PC-3 (cell line): ENCODE measurements at regions of chr1 and their contacts with region 1.

Region 1: DNA sequence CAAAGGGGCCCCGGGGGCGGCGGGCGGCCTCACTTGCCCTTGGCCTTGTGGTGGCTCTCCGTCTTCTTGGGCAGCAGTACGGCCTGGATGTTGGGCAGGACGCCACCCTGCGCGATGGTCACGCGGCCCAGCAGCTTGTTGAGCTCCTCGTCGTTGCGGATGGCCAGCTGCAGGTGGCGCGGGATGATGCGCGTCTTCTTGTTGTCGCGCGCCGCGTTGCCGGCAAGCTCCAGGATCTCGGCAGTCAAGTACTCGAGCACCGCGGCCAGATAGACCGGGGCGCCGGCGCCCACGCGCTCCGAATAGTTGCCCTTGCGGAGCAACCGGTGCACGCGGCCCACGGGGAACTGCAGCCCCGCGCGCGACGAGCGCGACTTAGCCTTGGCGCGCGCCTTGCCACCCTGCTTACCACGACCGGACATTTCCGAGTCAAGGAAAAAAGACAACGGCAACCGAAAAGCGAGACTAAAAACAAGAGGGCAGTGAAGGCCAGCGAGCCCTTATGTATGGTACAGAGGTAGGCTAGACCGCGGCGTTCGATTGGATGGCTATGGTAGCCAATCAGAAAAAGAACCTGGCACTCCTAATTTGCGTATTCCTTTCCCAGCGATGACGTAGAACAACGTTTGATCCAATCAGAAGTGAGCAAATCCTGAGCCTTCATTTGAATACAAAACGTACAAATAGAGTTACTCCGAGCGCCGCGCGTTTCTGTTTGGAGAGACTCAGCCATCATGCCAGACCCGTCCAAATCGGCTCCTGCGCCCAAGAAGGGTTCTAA is 29.6 kb upstream of the RNF187 start:
- DNase-seq: peak; percentile 100
- ATAC-seq: peak; percentile 86
- H3K4me3 ChIP-seq: peak overlapping the region; percentile 87
- H3K27ac ChIP-seq: peak overlapping the region; percentile 64
- H3K4me1 ChIP-seq: peaks cover 15% of the 10 kb centered on the region; the same call in 1 of the 2 replicates
- H3K27me3 ChIP-seq: no peaks in the 10 kb centered on the region
- CTCF ChIP-seq: peak; percentile 56

Region 2: DNA sequence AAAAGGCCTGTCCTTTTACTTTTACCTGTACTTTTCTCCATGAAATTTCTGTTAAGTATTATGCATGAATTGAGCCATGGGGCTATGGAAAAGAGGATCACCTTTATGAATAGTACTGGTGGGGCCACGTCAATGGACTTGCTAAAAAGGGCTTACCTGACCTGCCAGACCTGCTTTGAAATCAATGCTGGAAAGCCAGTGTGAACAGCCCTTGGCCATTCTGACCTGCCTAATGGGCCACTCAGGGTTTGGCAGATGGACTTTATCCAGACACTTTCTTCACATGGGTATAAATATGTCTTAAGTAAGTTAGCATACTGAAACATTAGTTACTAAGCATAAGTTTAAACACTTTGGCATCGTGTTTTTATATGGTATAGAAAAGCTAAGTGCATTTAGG is 325.8 kb before region 1 on chr1:
- CTCF ChIA-PET with region 1: no interaction called
- POLR2A ChIA-PET with region 1: no interaction called
- intact Hi-C with region 1: loop called (anchors 1 kb)
- DNase-seq: peak; percentile 58
- ATAC-seq: no peak
- H3K4me3 ChIP-seq: peak overlapping the region; percentile 65
- H3K27ac ChIP-seq: peak overlapping the region; percentile 54
- H3K4me1 ChIP-seq: peaks cover 12% of the 10 kb centered on the region
- H3K27me3 ChIP-seq: no peaks in the 10 kb centered on the region
- CTCF ChIP-seq: no peak

Region 3: GRCh38 chr1:228265167-228265566 is 192.4 kb before region 1 on chr1:
- CTCF ChIA-PET with region 1: no interaction called
- POLR2A ChIA-PET with region 1: no interaction called
- intact Hi-C with region 1: loop called (anchors 5 kb)
- DNase-seq: peak; percentile 28
- ATAC-seq: peak; percentile 81
- H3K4me3 ChIP-seq: no peak overlapping the region
- H3K27ac ChIP-seq: no peak overlapping the region
- H3K4me1 ChIP-seq: no peaks in the 10 kb centered on the region
- H3K27me3 ChIP-seq: no peaks in the 10 kb centered on the region
- CTCF ChIP-seq: peak; percentile 45

Region 4: GRCh38 chr1:228393248-228393699 is 64.3 kb before region 1 on chr1:
- CTCF ChIA-PET with region 1: no interaction called
- POLR2A ChIA-PET with region 1: no interaction called
- intact Hi-C with region 1: loop called (anchors 5 kb)
- DNase-seq: peak; percentile 50
- ATAC-seq: peak; percentile 70
- H3K4me3 ChIP-seq: no peak overlapping the region
- H3K27ac ChIP-seq: no peak overlapping the region
- H3K4me1 ChIP-seq: no peaks in the 10 kb centered on the region
- H3K27me3 ChIP-seq: no peaks in the 10 kb centered on the region
- CTCF ChIP-seq: peak; percentile 70

Region 5: GRCh38 chr1:228486596-228487335 is 29.2 kb after region 1 on chr1:
- CTCF ChIA-PET with region 1: interaction called, 4 read pairs
- POLR2A ChIA-PET with region 1: interaction called, 12 read pairs
- intact Hi-C with region 1: loop called (anchors 1 kb)
- DNase-seq: peak; percentile 83
- ATAC-seq: peak; percentile 65
- H3K4me3 ChIP-seq: peak overlapping the region; percentile 76
- H3K27ac ChIP-seq: peak overlapping the region; percentile 91
- H3K4me1 ChIP-seq: peaks cover 22% of the 10 kb centered on the region
- H3K27me3 ChIP-seq: no peaks in the 10 kb centered on the region
- CTCF ChIP-seq: no peak

Region 6: GRCh38 chr1:228497817-228498216 is 40.2 kb after region 1 on chr1:
- CTCF ChIA-PET with region 1: no interaction called
- POLR2A ChIA-PET with region 1: no interaction called
- intact Hi-C with region 1: no loop called
- DNase-seq: no peak
- ATAC-seq: no peak
- H3K4me3 ChIP-seq: no peak overlapping the region
- H3K27ac ChIP-seq: no peak overlapping the region
- H3K4me1 ChIP-seq: peaks cover 3% of the 10 kb centered on the region; the same call in 1 of the 2 replicates
- H3K27me3 ChIP-seq: no peaks in the 10 kb centered on the region
- CTCF ChIP-seq: no peak

Region 7: GRCh38 chr1:228541725-228542124 is 84.1 kb after region 1 on chr1:
- CTCF ChIA-PET with region 1: no interaction called
- POLR2A ChIA-PET with region 1: no interaction called
- intact Hi-C with region 1: no loop called
- DNase-seq: no peak
- ATAC-seq: no peak
- H3K4me3 ChIP-seq: no peak overlapping the region
- H3K27ac ChIP-seq: no peak overlapping the region
- H3K4me1 ChIP-seq: no peaks in the 10 kb centered on the region
- H3K27me3 ChIP-seq: no peaks in the 10 kb centered on the region
- CTCF ChIP-seq: no peak